ENCODE measurements at regions of chr1 and their contacts with region 1.

Region 1: DNA sequence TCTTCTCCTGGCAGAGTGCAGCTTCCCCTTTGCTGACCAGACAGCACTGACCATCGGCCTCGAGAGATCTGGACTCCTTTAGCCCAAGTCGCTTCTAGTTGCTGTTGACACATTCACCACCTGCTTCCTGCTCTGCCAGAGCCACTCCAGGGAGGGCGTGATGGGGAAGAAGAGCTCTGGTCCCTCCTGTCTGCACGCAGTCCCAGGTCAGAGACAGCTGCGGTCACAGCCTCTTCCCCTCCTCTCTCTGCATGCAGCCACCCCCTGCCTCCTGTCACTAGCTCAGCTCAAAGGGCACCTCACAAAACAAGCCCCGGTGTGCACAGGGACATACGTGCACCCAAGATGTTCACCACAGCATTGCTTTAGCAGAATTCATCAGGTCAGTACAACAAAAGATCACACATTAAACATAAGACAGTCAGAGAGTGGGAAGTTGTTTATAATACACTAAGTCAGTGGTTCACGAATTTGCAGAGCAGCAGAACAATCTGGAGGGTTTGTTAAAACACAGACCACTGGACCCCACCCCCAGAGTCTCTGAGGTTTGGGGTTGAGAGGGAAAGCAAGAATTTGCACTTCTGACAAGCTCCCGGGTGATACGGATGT is 132.9 kb downstream of the SYF2 start:
- DNase-seq: peak; percentile 8 to 82 (median 52)
- ATAC-seq: peak; percentile 50
- H3K4me3 ChIP-seq: peak overlapping the region; percentile 21 to 32
- H3K4me3 Mint-ChIP-seq: peak overlapping the region; percentile 71
- H3K27ac ChIP-seq: peak overlapping the region; percentile 19 to 60
- H3K27ac Mint-ChIP-seq: peak overlapping the region; percentile 86
- H3K4me1 ChIP-seq: peaks cover 73% of the 10 kb centered on the region
- H3K4me1 Mint-ChIP-seq: peaks cover 74% of the 10 kb centered on the region
- H3K27me3 ChIP-seq: no peaks in the 10 kb centered on the region
- H3K27me3 Mint-ChIP-seq: no peaks in the 10 kb centered on the region
- CTCF ChIP-seq: no peak

Region 2: GRCh38 chr1:24935615-24936484 is 163.6 kb before region 1 on chr1:
- CTCF ChIA-PET with region 1: interaction called, 68 read pairs
- POLR2A ChIA-PET with region 1: interaction called, 23 read pairs
- intact Hi-C with region 1: loop called (anchors 1 kb)
- DNase-seq: no peak
- ATAC-seq: no peak
- H3K4me3 ChIP-seq: no peak overlapping the region
- H3K4me3 Mint-ChIP-seq: no peak overlapping the region
- H3K27ac ChIP-seq: no peak overlapping the region
- H3K27ac Mint-ChIP-seq: peak overlapping the region; percentile 35
- H3K4me1 ChIP-seq: peaks cover 20% of the 10 kb centered on the region
- H3K4me1 Mint-ChIP-seq: peaks cover 36% of the 10 kb centered on the region
- H3K27me3 ChIP-seq: no peaks in the 10 kb centered on the region
- H3K27me3 Mint-ChIP-seq: no peaks in the 10 kb centered on the region
- CTCF ChIP-seq: no peak

Region 3: GRCh38 chr1:24987875-24988557 is 111.4 kb before region 1 on chr1:
- CTCF ChIA-PET with region 1: interaction called, 13 read pairs
- POLR2A ChIA-PET with region 1: no interaction called
- intact Hi-C with region 1: no loop called
- DNase-seq: peak in 2 of 9 experiments; percentile 33 to 71
- ATAC-seq: peak; percentile 45
- H3K4me3 ChIP-seq: no peak overlapping the region
- H3K4me3 Mint-ChIP-seq: peak overlapping the region; percentile 53
- H3K27ac ChIP-seq: no peak overlapping the region
- H3K27ac Mint-ChIP-seq: peak overlapping the region; percentile 83
- H3K4me1 ChIP-seq: peaks cover 100% of the 10 kb centered on the region
- H3K4me1 Mint-ChIP-seq: peaks cover 97% of the 10 kb centered on the region
- H3K27me3 ChIP-seq: no peaks in the 10 kb centered on the region
- H3K27me3 Mint-ChIP-seq: no peaks in the 10 kb centered on the region
- CTCF ChIP-seq: no peak

Region 4: DNA sequence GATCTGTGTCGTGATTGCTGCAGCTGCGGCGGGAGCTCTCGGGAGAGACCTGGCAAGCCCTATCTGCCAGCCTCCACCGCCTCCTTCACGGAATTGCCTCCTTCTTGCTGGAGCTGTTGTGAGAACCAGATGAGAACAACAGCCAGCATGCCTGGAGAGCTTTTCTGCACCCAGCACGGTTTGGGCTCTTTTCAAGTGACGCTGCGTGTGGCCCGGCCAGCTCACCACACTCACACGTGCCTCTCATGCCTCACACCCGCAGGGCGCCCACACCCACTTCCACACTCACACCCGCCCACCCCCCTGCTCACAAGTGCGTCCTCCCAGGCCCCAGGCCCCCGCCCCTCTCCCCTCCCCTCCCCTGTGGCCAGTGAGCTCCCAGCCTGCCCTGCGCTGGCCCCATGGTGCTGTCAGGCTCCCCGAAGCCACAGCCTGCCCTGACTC is 33.6 kb before region 1 on chr1:
- CTCF ChIA-PET with region 1: interaction called, 8 read pairs
- POLR2A ChIA-PET with region 1: interaction called, 15 read pairs
- intact Hi-C with region 1: loop called (anchors 2 kb)
- DNase-seq: peak; percentile 35 to 94 (median 63)
- ATAC-seq: peak; percentile 74
- H3K4me3 ChIP-seq: peak overlapping the region; percentile 16 to 67
- H3K4me3 Mint-ChIP-seq: peak overlapping the region; percentile 78
- H3K27ac ChIP-seq: peak overlapping the region; percentile 57 to 79
- H3K27ac Mint-ChIP-seq: peak overlapping the region; percentile 92
- H3K4me1 ChIP-seq: peaks cover 25% of the 10 kb centered on the region
- H3K4me1 Mint-ChIP-seq: peaks cover 34% of the 10 kb centered on the region
- H3K27me3 ChIP-seq: no peaks in the 10 kb centered on the region
- H3K27me3 Mint-ChIP-seq: no peaks in the 10 kb centered on the region
- CTCF ChIP-seq: no peak

Region 5: GRCh38 chr1:25111706-25112105 is 12.3 kb after region 1 on chr1:
- CTCF ChIA-PET with region 1: interaction called, 17 read pairs
- POLR2A ChIA-PET with region 1: interaction called, 3 read pairs
- intact Hi-C with region 1: no loop called
- DNase-seq: no peak
- ATAC-seq: no peak
- H3K4me3 ChIP-seq: no peak overlapping the region
- H3K4me3 Mint-ChIP-seq: no peak overlapping the region
- H3K27ac ChIP-seq: no peak overlapping the region
- H3K27ac Mint-ChIP-seq: no peak overlapping the region
- H3K4me1 ChIP-seq: peaks cover 22% of the 10 kb centered on the region
- H3K4me1 Mint-ChIP-seq: peaks cover 20% of the 10 kb centered on the region
- H3K27me3 ChIP-seq: no peaks in the 10 kb centered on the region
- H3K27me3 Mint-ChIP-seq: no peaks in the 10 kb centered on the region
- CTCF ChIP-seq: no peak